ENCODE measurements at regions of chr12 and their contacts with region 1.

Region 1: DNA sequence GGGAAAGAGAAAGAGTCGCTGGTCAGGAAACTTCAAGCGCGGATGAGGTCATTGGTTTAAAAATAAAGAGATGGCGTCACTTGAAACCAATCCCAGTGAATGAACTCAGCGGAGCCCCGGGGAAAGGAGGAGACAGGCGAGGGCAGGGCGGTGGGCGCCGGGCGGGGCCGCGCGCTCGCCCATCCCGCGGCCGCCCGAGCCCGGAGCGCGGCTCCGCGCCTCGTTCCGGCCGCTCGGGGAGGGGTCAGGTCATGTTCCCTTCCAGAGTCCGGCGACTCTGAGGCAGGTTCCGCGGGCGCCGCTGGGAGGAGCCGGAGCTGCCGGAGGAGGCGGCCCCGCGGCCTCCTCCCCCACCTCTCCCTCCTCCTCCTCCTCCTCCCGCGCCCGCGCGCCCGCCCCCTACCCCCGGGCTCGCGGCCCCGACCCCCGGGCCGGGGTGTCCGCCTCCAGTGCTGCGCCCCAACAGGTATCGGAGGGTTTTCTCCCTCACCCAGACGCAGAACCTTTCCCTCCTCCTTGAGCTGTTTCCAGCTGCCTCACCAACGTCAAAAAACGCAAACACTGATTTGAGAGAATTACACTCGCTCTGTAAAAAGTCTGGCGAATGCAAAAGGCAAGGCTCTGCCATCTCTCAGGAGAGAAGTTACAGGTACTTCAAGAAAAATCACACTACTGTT is at the start of gene DUSP16:
- DNase-seq: peak; percentile 93 to 96 (median 95)
- ATAC-seq: peak; percentile 92 to 98 (median 96)
- H3K4me3 ChIP-seq: peak within 1 kb of the TSS; percentile 50 to 95 (median 75)
- H3K27ac ChIP-seq: peak within 1 kb of the TSS; percentile 97 to 100 (median 99)
- H3K4me1 ChIP-seq: peaks cover 0 to 35% (median 31%) of the 10 kb centered on the region in 12 donors
- H3K27me3 ChIP-seq: no peaks in the 10 kb centered on the region
- CTCF ChIP-seq: peak in 7 of 12 donors; percentile 24 to 51 (median 32)
- POLR2A ChIP-seq: peak in 1 of 2 donors; percentile 81
- total RNA-seq, gene DUSP16: 9.7 to 24.7 (median 15.5) TPM

Region 2: DNA sequence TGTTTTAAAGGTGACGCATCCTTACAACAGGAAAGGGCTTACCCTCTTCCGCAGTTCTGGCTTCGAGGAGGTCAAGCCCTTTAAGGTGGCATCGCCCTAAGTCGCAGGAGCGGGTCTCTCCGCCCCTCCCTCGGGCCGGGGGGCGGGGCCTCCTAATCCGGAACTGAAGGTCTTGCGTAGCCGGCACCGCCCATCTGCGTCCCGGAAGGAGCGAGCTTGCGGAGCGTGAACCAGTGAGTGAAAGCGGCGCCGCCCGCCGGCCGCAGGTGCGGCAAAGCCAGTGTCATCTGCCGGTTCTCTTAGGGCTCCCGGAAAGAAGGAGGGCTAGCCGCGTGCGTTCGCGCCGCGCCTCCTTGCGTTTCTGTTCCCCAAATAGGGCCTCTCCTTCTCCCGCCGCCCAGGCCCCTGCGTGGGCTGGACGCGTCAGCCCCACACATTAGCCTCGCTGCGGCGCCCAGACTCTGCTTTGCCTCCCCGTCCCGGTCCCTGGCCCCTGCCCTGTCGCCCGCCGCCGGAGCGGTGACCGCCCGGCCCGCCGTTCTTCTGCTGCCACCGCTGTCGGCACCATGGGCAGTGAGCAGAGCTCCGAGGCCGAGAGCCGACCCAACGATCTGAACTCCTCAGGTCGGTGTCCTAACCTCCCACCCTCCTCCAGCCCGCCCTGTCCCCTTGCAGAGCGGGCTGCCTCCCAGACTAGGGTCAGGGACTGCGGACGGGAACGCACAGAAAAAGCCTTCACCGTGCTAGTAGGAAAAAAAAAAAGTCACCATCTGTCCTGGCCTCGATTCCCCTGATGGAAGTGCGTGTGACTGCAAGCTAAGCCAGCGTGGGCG is 205.6 kb before region 1 on chr12 and contains the start of gene BORCS5:
- intact Hi-C with region 1: loop called in 1 of 10 experiments (anchors 5 kb)
- DNase-seq: peak; percentile 96 to 98 (median 98)
- ATAC-seq: peak; percentile 95 to 99 (median 98)
- H3K4me3 ChIP-seq: peak within 1 kb of the TSS; percentile 61 to 98 (median 86)
- H3K27ac ChIP-seq: peak within 1 kb of the TSS; percentile 87 to 99 (median 96)
- H3K4me1 ChIP-seq: peaks cover 0 to 33% (median 12%) of the 10 kb centered on the region in 12 donors
- H3K27me3 ChIP-seq: no peaks in the 10 kb centered on the region
- CTCF ChIP-seq: peak in 7 of 12 donors; percentile 16 to 45 (median 31)
- POLR2A ChIP-seq: peak; percentile 81 to 98
- total RNA-seq, gene BORCS5: 7.6 to 21.3 (median 12.3) TPM

Region 3: GRCh38 chr12:12442548-12443071 is 120.1 kb before region 1 on chr12:
- intact Hi-C with region 1: loop called in 1 of 10 experiments (anchors 5 kb)
- DNase-seq: no peak
- ATAC-seq: peak; percentile 43 to 71 (median 60)
- H3K4me3 ChIP-seq: no peak overlapping the region
- H3K27ac ChIP-seq: peak overlapping the region; percentile 36 to 80 (median 70)
- H3K4me1 ChIP-seq: peaks cover 0 to 66% (median 31%) of the 10 kb centered on the region in 12 donors
- H3K27me3 ChIP-seq: no peaks in the 10 kb centered on the region
- CTCF ChIP-seq: no peak
- POLR2A ChIP-seq: no peak

Region 4: GRCh38 chr12:12505544-12506495 is 56.9 kb before region 1 on chr12:
- intact Hi-C with region 1: loop called in 7 of 10 experiments (anchors 1 to 10 kb)
- DNase-seq: no peak
- ATAC-seq: peak; percentile 55 to 86 (median 83)
- H3K4me3 ChIP-seq: peak overlapping the region in 9 of 12 donors; percentile 22 to 49 (median 32)
- H3K27ac ChIP-seq: peak overlapping the region; percentile 29 to 86 (median 72)
- H3K4me1 ChIP-seq: peaks cover 6 to 65% (median 44%) of the 10 kb centered on the region in 12 donors
- H3K27me3 ChIP-seq: no peaks in the 10 kb centered on the region
- CTCF ChIP-seq: no peak
- POLR2A ChIP-seq: no peak

Region 5: DNA sequence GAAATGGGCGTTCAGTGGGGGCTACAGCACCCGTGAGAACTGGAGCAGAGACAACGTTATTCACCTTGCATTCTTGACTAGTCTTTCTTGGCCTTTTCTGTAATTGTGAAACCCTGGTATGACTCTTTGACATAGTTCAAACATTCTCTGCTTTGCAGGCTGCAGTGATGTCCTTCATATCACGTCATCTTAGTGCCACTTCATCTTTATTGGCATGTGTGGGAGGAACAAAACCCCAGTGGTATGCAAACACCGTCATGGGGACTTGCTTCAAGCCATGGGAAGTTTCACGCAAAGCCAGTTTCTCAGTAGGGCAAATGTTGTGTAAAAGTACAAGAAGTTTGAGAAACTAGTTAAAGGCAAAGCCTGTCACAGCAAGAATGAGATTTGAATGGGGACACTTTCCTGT is 20.2 kb after region 1 on chr12:
- intact Hi-C with region 1: no loop called
- DNase-seq: no peak
- ATAC-seq: no peak
- H3K4me3 ChIP-seq: no peak overlapping the region
- H3K27ac ChIP-seq: no peak overlapping the region
- H3K4me1 ChIP-seq: peaks cover 0 to 8% (median 0%) of the 10 kb centered on the region in 12 donors
- H3K27me3 ChIP-seq: no peaks in the 10 kb centered on the region
- CTCF ChIP-seq: no peak
- POLR2A ChIP-seq: no peak

Region 6: GRCh38 chr12:12696562-12697383 is 134.1 kb after region 1 on chr12:
- intact Hi-C with region 1: loop called in 5 of 10 experiments (anchors 5 to 10 kb)
- DNase-seq: peak; percentile 91 to 95 (median 93)
- ATAC-seq: peak; percentile 87 to 95 (median 92)
- H3K4me3 ChIP-seq: peak overlapping the region; percentile 15 to 73 (median 64)
- H3K27ac ChIP-seq: peak overlapping the region; percentile 90 to 99 (median 96)
- H3K4me1 ChIP-seq: peaks cover 0 to 23% (median 5%) of the 10 kb centered on the region in 12 donors
- H3K27me3 ChIP-seq: no peaks in the 10 kb centered on the region
- CTCF ChIP-seq: peak in 1 of 12 donors; percentile 16
- POLR2A ChIP-seq: peak in 1 of 2 donors; percentile 73

Region 7: DNA sequence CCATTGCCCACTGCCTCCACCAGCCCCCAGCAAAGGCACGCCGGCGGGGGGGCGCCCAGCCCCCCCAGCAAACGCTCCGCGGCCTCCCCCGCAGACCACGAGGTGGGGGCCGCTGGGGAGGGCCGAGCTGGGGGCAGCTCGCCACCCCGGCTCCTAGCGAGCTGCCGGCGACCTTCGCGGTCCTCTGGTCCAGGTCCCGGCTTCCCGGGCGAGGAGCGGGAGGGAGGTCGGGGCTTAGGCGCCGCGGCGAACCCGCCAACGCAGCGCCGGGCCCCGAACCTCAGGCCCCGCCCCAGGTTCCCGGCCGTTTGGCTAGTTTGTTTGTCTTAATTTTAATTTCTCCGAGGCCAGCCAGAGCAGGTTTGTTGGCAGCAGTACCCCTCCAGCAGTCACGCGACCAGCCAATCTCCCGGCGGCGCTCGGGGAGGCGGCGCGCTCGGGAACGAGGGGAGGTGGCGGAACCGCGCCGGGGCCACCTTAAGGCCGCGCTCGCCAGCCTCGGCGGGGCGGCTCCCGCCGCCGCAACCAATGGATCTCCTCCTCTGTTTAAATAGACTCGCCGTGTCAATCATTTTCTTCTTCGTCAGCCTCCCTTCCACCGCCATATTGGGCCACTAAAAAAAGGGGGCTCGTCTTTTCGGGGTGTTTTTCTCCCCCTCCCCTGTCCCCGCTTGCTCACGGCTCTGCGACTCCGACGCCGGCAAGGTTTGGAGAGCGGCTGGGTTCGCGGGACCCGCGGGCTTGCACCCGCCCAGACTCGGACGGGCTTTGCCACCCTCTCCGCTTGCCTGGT is 154.3 kb after region 1 on chr12 and contains the start of gene CDKN1B:
- intact Hi-C with region 1: loop called in 6 of 10 experiments (anchors 5 to 10 kb)
- DNase-seq: peak; percentile 92 to 96 (median 94)
- ATAC-seq: peak; percentile 86 to 96 (median 94)
- H3K4me3 ChIP-seq: peak within 1 kb of the TSS; percentile 77 to 96 (median 92)
- H3K27ac ChIP-seq: peak within 1 kb of the TSS; percentile 96 to 100 (median 100)
- H3K4me1 ChIP-seq: peaks cover 0 to 62% (median 56%) of the 10 kb centered on the region in 12 donors
- H3K27me3 ChIP-seq: no peaks in the 10 kb centered on the region
- CTCF ChIP-seq: no peak
- POLR2A ChIP-seq: peak; percentile 65 to 80
- total RNA-seq, gene CDKN1B: 25.8 to 44.9 (median 35.1) TPM

Measured in heart left ventricle (tissue), 16 donors.